HCT116 (cell line): ENCODE measurements at regions of chr19 and their contacts with region 1.

Region 1: GRCh38 chr19:49640113-49640898 is at the start of gene RRAS:
- DNase-seq: peak; percentile 99
- ATAC-seq: peak; percentile 76
- H3K4me3 ChIP-seq: peak within 1 kb of the TSS; percentile 75 to 92
- H3K27ac ChIP-seq: peak within 1 kb of the TSS; percentile 98
- H3K4me1 ChIP-seq: peaks cover 15 to 40% of the 10 kb centered on the region in 2 experiments
- H3K27me3 ChIP-seq: no peaks in the 10 kb centered on the region
- CTCF ChIP-seq: no peak
- POLR2A ChIP-seq: peak; percentile 71
- RAD21 ChIP-seq: no peak
- total RNA-seq, gene RRAS: 55.9 TPM

Region 2: DNA sequence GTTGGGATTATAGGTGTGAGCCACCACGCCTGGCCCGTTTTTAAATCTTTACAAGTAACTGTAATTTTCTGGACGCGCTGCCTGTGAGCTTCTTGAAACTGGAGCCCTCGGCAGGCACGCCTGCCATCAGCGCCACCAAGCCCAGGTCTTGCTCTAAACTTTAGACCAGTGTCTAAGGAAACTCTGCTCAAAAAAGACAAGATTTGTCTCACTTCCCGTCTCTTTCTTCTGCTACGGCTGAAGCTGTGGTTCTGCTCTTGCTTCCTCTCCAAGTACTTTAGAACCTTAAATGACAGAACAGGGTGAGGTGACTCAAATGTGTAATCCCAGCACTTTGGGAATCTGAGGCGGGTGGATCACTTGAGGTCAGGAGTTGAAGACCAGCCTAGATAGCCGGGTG is 87.6 kb before region 1 on chr19:
- CTCF ChIA-PET with region 1: no interaction called
- POLR2A ChIA-PET with region 1: no interaction called
- RAD21 ChIA-PET with region 1: no interaction called
- intact Hi-C with region 1: no loop called
- DNase-seq: no peak
- ATAC-seq: no peak
- H3K4me3 ChIP-seq: no peak overlapping the region
- H3K27ac ChIP-seq: no peak overlapping the region
- H3K4me1 ChIP-seq: peaks cover 0 to 6% of the 10 kb centered on the region in 2 experiments; a peak in 2 of 4 replicates
- H3K27me3 ChIP-seq: no peaks in the 10 kb centered on the region
- CTCF ChIP-seq: no peak
- POLR2A ChIP-seq: no peak
- RAD21 ChIP-seq: no peak

Region 3: GRCh38 chr19:49570138-49570856 is 70.0 kb before region 1 on chr19:
- CTCF ChIA-PET with region 1: interaction called, 23 read pairs
- POLR2A ChIA-PET with region 1: interaction called, 5 read pairs
- RAD21 ChIA-PET with region 1: no interaction called
- intact Hi-C with region 1: no loop called
- DNase-seq: peak; percentile 83
- ATAC-seq: peak; percentile 77
- H3K4me3 ChIP-seq: no peak overlapping the region
- H3K27ac ChIP-seq: peak overlapping the region; percentile 47
- H3K4me1 ChIP-seq: peaks cover 44 to 61% of the 10 kb centered on the region in 2 experiments
- H3K27me3 ChIP-seq: no peaks in the 10 kb centered on the region
- CTCF ChIP-seq: peak; percentile 97 to 99 (median 99)
- POLR2A ChIP-seq: no peak
- RAD21 ChIP-seq: peak; percentile 87

Region 4: GRCh38 chr19:49580264-49581006 is 59.9 kb before region 1 on chr19 and contains the start of gene NOSIP:
- CTCF ChIA-PET with region 1: no interaction called
- POLR2A ChIA-PET with region 1: interaction called, 24 read pairs
- RAD21 ChIA-PET with region 1: no interaction called
- intact Hi-C with region 1: loop called (anchors 2 kb)
- DNase-seq: peak; percentile 95
- ATAC-seq: peak; percentile 85
- H3K4me3 ChIP-seq: peak within 1 kb of the TSS; percentile 86 to 99
- H3K27ac ChIP-seq: peak within 1 kb of the TSS; percentile 56
- H3K4me1 ChIP-seq: peaks cover 18 to 50% of the 10 kb centered on the region in 2 experiments
- H3K27me3 ChIP-seq: no peaks in the 10 kb centered on the region
- CTCF ChIP-seq: no peak
- POLR2A ChIP-seq: peak; percentile 97
- RAD21 ChIP-seq: no peak
- total RNA-seq, gene NOSIP: 133 TPM

Region 5: DNA sequence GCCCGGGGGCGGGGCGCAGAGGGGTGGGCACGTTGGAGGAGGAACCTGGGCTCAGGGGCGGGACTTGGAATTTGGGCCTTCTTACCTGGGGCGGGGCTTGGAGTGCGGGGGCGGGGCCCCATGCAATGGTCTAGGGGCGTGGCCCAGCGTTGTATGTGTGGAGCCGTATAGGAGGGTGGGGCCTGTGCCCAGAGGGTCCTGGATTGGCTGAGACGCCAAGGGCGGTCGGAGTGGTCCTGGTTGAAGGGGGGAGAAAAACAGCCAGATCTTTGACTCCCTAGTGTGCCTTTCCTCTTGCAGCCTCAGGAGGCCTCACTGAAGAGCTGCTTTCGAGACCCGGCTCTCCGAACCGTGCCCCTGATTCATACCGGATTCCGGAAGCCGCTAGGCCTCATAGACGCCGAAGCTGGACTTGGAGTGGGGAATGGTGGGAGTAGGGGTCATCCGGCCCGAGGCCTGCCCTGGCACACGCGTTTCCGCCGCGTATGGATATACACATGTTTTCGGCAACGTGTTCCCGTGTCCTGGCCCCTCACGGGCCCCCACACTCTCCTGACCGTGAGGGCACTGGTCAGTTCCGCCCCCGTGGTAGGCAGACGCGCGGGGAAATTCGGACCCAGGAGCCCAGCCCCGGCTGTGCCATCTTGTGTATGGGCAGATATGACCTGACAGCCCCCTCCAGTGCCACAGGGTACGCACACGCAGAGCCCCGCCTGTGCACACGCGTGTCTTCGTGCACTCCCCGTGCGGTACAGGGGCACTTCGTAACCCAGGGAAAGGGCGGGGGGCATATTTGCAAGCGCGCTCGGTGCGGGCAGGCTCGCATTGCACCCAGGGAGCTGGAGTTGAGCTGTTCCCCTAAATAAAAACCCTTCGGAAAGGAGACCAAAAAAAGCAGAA is 50.0 kb before region 1 on chr19:
- CTCF ChIA-PET with region 1: no interaction called
- POLR2A ChIA-PET with region 1: interaction called, 50 read pairs
- RAD21 ChIA-PET with region 1: interaction called in 1 of 2 experiments, 6 read pairs
- intact Hi-C with region 1: loop called (anchors 1 kb)
- DNase-seq: peak; percentile 97
- ATAC-seq: peak; percentile 82
- H3K4me3 ChIP-seq: peak overlapping the region; percentile 89 to 93
- H3K27ac ChIP-seq: peak overlapping the region; percentile 98
- H3K4me1 ChIP-seq: peaks cover 10 to 33% of the 10 kb centered on the region in 2 experiments; a peak in 3 of 4 replicates
- H3K27me3 ChIP-seq: no peaks in the 10 kb centered on the region
- CTCF ChIP-seq: no peak
- POLR2A ChIP-seq: peak; percentile 90
- RAD21 ChIP-seq: no peak

Region 6: GRCh38 chr19:49614096-49614833 is 26.0 kb before region 1 on chr19:
- CTCF ChIA-PET with region 1: interaction called, 4 read pairs
- POLR2A ChIA-PET with region 1: interaction called, 12 read pairs
- RAD21 ChIA-PET with region 1: no interaction called
- intact Hi-C with region 1: loop called (anchors 2 kb)
- DNase-seq: no peak
- ATAC-seq: peak; percentile 84
- H3K4me3 ChIP-seq: peak overlapping the region in 1 of 2 experiments; percentile 48; a peak in 3 of 4 replicates
- H3K27ac ChIP-seq: peak overlapping the region; percentile 69
- H3K4me1 ChIP-seq: peaks cover 28 to 36% of the 10 kb centered on the region in 2 experiments
- H3K27me3 ChIP-seq: no peaks in the 10 kb centered on the region
- CTCF ChIP-seq: peak in 1 of 3 experiments; percentile 23; a peak in 2 of 6 replicates
- POLR2A ChIP-seq: no peak
- RAD21 ChIP-seq: no peak

Region 7: GRCh38 chr19:49665351-49666119 is 25.2 kb after region 1 on chr19 and contains the starts of genes BCL2L12 and IRF3:
- CTCF ChIA-PET with region 1: interaction called, 4 read pairs
- POLR2A ChIA-PET with region 1: interaction called, 24 read pairs
- RAD21 ChIA-PET with region 1: no interaction called
- intact Hi-C with region 1: loop called (anchors 1 kb)
- DNase-seq: peak; percentile 88
- ATAC-seq: peak; percentile 75
- H3K4me3 ChIP-seq: peak within 1 kb of the TSS; percentile 90 to 95
- H3K27ac ChIP-seq: peak within 1 kb of the TSS; percentile 95
- H3K4me1 ChIP-seq: peaks cover 6 to 30% of the 10 kb centered on the region in 2 experiments; a peak in 3 of 4 replicates
- H3K27me3 ChIP-seq: no peaks in the 10 kb centered on the region
- CTCF ChIP-seq: no peak
- POLR2A ChIP-seq: no peak
- RAD21 ChIP-seq: no peak
- total RNA-seq, gene BCL2L12: 93.9 TPM
- total RNA-seq, gene IRF3: 129 TPM

Region 8: DNA sequence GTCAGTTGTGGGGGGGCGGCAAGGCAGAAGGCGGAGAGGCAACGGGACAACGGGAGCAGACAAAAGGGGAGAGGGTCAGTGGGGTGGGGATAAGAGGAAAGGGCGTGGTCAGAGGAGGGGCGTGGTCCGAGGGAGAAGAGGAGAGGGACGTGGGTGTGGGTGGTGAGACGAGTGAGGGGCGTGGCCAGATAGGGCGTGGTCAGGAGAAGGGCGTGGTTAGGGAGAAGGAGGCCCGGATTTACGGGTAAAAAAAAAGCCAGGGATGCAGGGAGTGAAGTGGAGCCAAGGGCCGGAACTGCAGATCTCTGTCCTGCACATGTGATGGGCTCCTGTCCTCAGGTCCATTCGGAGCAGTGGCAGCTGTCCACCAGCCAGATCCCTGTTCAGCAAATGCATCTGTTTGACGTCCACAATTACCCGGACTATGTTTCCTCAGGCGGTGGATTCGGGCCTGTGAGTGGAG is 72.1 kb after region 1 on chr19:
- CTCF ChIA-PET with region 1: interaction called, 3 read pairs
- POLR2A ChIA-PET with region 1: interaction called, 3 read pairs
- RAD21 ChIA-PET with region 1: no interaction called
- intact Hi-C with region 1: loop called (anchors 2 kb)
- DNase-seq: peak; percentile 92
- ATAC-seq: peak; percentile 82
- H3K4me3 ChIP-seq: peak overlapping the region; percentile 48 to 54
- H3K27ac ChIP-seq: peak overlapping the region; percentile 39
- H3K4me1 ChIP-seq: peaks cover 10 to 43% of the 10 kb centered on the region in 2 experiments
- H3K27me3 ChIP-seq: no peaks in the 10 kb centered on the region
- CTCF ChIP-seq: no peak
- POLR2A ChIP-seq: peak; percentile 69
- RAD21 ChIP-seq: no peak